MCF 10A (cell line): ENCODE measurements at regions of chr11 and their contacts with region 1.

Region 1: GRCh38 chr11:925496-926321 is at the start of gene AP2A2:
- DNase-seq: peak; percentile 80
- H3K4me3 Mint-ChIP-seq: peak within 1 kb of the TSS; percentile 83
- H3K27ac Mint-ChIP-seq: peak within 1 kb of the TSS; percentile 76
- H3K4me1 Mint-ChIP-seq: peaks cover 9% of the 10 kb centered on the region
- H3K27me3 Mint-ChIP-seq: no peaks in the 10 kb centered on the region
- CTCF ChIP-seq: peak; percentile 75
- total RNA-seq, gene AP2A2: 70.5 and 70.6 TPM in 2 replicates

Region 2: DNA sequence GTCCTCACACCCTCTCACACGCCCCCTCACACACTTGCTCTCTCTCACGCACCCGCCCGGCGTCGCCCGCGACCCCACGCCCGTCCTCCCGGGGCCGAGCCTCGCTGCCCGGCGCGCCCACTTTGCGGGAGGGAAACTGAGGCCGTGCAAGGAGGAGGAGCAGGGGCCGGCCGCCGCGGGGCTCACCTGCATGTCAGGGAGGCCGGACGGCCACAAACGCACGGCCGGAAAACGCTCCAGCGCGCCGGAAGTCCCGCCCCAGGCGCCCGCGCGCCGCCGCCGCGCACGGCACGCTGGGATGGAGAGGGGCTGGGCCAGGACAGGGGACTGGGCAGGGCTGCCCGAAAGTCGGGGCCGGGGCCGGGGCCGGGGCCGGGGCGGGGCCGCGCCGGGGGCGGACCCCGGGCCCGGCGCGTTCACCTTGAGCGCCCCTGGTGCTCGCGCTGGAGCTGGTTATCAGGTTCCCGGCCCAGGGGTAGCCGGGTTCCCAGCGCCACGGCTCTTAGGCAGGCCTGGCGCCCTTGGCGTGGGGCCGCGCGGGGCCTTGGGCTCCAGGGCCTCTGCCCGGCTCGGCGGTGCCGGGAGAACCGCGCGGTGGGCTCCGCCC is 15.0 kb before region 1 on chr11 and contains the start of gene CHID1:
- CTCF ChIA-PET with region 1: interaction called, 4 read pairs
- POLR2A ChIA-PET with region 1: interaction called, 11 read pairs
- intact Hi-C with region 1: no loop called
- DNase-seq: peak; percentile 86
- H3K4me3 Mint-ChIP-seq: peak within 1 kb of the TSS; percentile 90
- H3K27ac Mint-ChIP-seq: peak within 1 kb of the TSS; percentile 39
- H3K4me1 Mint-ChIP-seq: peaks cover 11% of the 10 kb centered on the region
- H3K27me3 Mint-ChIP-seq: no peaks in the 10 kb centered on the region
- CTCF ChIP-seq: no peak
- total RNA-seq, gene CHID1: 82.1 and 94.8 TPM in 2 replicates